ENCODE measurements at regions of chr1 and their contacts with region 1.

Region 1: GRCh38 chr1:150410582-150411101 is 46.7 kb downstream of the RPRD2 start:
- DNase-seq: no peak
- ATAC-seq: no peak
- H3K4me3 Mint-ChIP-seq: no peak overlapping the region
- H3K27ac Mint-ChIP-seq: no peak overlapping the region
- H3K4me1 Mint-ChIP-seq: peaks cover 37% of the 10 kb centered on the region
- H3K27me3 Mint-ChIP-seq: no peaks in the 10 kb centered on the region
- CTCF ChIP-seq: no peak

Region 2: DNA sequence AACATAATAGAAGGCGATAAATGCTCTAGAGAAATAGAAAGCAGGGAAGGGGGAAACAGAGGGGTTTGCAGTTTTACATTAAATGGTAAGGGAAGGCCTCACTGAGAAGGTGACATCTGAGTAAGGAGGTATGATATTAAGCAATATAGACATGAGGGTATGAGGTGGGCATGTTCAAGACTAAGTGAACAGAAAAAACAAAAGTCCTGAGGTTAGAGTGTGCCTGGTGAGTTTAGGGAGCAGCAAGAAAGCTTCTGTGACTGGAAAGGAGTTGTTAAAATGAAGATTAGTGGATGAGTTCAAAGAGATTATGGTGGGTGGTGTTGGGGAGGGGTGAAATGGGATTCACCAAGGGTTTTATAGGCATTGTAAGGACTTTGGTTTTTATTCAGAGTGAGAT is 38.1 kb before region 1 on chr1:
- CTCF ChIA-PET with region 1: no interaction called
- POLR2A ChIA-PET with region 1: no interaction called
- intact Hi-C with region 1: loop called (anchors 5 kb)
- DNase-seq: no peak
- ATAC-seq: no peak
- H3K4me3 Mint-ChIP-seq: no peak overlapping the region
- H3K27ac Mint-ChIP-seq: no peak overlapping the region
- H3K4me1 Mint-ChIP-seq: peaks cover 55% of the 10 kb centered on the region
- H3K27me3 Mint-ChIP-seq: no peaks in the 10 kb centered on the region
- CTCF ChIP-seq: no peak

Region 3: DNA sequence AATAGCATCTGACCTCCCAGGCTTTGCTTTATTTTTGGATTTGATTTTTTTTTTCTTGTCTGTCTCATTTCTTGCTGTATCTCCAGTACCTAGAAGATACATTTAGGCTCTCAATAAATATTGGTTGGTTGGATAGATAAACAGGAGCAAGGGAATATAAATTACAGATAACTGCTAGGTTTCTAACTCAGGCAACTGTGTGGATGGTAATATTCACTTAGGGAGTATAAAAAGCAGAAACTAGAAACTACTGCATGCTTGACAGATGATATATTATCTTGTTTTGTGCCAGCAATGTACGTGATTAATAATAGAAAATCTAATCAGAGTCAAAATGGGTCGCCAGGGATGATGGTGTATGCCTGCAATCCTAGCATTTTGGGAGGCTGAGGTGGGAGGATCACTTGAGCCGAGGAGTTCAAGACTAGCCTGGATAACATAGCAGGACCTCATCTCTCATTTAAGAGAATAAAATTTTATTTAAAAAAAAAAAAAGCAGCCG is 45.6 kb after region 1 on chr1:
- CTCF ChIA-PET with region 1: no interaction called
- POLR2A ChIA-PET with region 1: no interaction called
- intact Hi-C with region 1: no loop called
- DNase-seq: no peak
- ATAC-seq: no peak
- H3K4me3 Mint-ChIP-seq: no peak overlapping the region
- H3K27ac Mint-ChIP-seq: no peak overlapping the region
- H3K4me1 Mint-ChIP-seq: no peaks in the 10 kb centered on the region
- H3K27me3 Mint-ChIP-seq: no peaks in the 10 kb centered on the region
- CTCF ChIP-seq: no peak